ENCODE measurements at regions of chr14 and their contacts with region 1.

Region 1: GRCh38 chr14:20855652-20856291 is 35.4 kb upstream of the RNASE3 start:
- DNase-seq: peak; percentile 60
- CTCF ChIP-seq: peak; percentile 69

Region 2: GRCh38 chr14:20343092-20343861 is 512.5 kb before region 1 on chr14 and contains the start of gene PARP2:
- in situ Hi-C with region 1: loop called (anchors 25 kb)
- DNase-seq: peak; percentile 94
- CTCF ChIP-seq: no peak

Region 3: GRCh38 chr14:20644520-20644919 is 211.3 kb before region 1 on chr14:
- in situ Hi-C with region 1: no loop called
- DNase-seq: no peak
- CTCF ChIP-seq: no peak

Region 4: DNA sequence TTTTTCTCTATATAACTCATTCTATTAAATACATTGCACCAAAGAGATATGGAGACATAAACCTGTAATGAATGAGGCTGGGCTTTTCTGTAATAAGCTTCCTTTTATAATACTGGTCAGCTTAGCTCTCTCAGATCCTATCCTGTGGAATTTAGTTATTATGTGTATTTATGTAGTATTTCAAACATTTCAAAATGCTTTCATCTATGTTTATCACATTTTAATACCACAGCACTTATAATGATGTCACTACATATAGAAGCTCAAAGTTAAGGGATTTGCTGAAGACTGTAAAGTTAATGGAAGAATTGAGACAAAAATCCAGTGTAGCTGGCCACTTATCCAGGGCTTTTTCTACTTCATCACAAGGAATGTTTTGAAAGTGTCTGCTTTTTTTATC is 155.8 kb before region 1 on chr14:
- in situ Hi-C with region 1: loop called (anchors 5 kb)
- DNase-seq: no peak
- CTCF ChIP-seq: no peak

Region 5: GRCh38 chr14:20969341-20969740 is 113.6 kb after region 1 on chr14:
- in situ Hi-C with region 1: loop called (anchors 10 kb)
- DNase-seq: no peak
- CTCF ChIP-seq: no peak

Region 6: DNA sequence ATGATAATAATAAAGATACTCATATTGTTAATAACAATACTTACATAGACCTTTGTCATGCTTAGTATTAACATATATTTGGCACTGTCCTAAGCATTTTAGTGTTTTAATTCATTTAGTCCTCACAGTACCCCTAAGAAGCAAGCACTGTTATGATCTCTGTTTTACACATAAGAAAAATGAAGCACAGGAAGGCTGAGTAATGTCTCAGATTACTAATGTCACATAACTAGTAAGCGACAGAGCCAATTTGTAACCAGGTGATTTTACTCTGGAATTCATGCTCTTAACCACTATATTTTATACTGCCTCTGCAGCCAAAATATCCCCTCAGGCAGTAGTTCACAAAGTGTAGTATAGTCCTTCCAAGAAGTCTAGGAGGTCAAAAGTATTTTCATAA is 265.3 kb after region 1 on chr14:
- in situ Hi-C with region 1: no loop called
- DNase-seq: no peak
- CTCF ChIP-seq: no peak